A549 (cell line): ENCODE measurements at regions of chr11 and their contacts with region 1.

Region 1: DNA sequence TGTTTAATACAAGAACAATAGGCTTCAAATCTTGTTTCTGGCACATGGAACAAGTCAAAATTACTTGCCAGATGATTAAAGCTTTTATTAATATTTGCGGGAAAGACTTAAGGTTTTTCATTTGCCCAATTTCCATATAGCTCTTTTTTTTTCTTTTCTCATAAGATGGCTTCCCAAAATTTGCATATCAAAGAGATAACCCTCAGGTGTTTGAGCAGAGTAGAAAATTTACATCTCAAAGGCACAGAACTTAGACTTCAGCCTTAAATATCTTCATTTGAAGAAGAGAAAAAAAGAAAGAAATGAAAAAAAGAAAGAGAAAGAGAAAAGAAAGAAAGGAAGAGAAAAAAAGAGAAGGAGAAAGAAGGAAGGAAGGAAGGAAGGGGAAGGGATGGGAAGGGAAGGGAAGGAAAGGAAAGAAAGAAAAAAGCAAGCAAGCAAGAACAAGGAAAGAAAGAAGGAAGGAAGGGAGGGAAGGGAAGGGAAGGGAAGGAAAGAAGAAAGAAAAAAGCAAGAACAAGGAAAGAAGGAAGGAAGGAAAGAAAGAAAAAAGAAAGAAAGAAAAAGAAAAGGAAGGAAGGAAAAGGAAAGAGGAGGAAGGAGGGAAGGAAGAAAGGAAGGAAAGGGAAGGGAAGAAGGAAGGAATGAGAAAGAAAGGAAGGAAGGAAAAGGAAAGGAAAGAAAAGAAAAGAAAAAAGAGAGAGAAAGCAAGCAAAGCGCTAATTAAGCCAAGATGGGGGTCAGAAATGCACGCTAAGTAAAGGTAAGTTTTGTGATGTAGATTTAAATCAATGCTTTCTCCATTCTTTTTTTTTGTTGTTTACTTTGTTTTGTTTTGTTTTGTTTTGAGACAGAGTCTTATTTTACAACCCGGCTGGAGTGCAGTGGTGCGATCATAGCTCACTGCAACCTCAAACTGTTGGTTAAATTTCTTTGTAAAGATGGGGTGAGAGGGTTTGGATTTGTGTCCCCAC is 20.2 kb upstream of the IFITM3 start:
- DNase-seq: no peak
- ATAC-seq: no peak
- H3K4me3 ChIP-seq: no peak overlapping the region
- H3K27ac ChIP-seq: no peak overlapping the region
- H3K4me1 ChIP-seq: no peaks in the 10 kb centered on the region
- CTCF ChIP-seq: no peak
- EP300 ChIP-seq: no peak
- POLR2A ChIP-seq: no peak
- RAD21 ChIP-seq: no peak

Region 2: DNA sequence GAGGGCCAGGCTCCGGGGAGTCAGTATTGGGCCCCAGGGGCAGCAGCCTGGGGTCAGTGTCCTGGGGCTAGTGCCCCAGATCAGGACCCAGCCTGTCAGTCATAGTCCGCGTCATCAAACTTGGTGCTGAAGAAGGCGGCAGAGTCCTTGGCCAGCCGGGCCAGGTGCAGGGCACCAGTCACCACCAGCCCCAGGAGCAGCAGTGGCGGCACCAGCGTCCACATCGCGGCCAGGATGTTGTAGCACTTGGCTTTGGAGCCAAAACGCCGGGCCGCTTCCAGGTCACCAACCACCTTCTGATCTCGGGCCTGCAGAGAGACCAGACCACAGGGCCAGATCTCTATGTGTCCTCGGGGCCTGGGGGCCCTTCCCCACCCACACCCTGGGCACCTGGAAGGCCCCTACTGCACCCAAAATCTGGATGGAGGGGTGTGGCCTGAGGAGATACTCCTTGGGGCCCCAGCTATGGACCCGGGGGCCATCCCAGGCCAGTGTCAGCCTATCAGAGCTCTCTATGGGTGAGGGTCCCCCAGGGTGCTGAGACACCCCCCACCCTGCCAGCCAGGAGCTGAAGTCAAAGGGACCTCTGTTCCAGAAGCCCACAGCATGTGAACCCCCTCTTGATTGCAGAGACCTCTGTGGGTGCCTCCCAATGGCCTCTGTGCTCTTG is 42.3 kb before region 1 on chr11:
- CTCF ChIA-PET with region 1: no interaction called
- POLR2A ChIA-PET with region 1: no interaction called
- DNase-seq: no peak
- ATAC-seq: no peak; a peak in 1 of 6 replicates
- H3K4me3 ChIP-seq: no peak overlapping the region
- H3K27ac ChIP-seq: peak overlapping the region in 1 of 2 experiments; percentile 21; a peak in 2 of 6 replicates
- H3K4me1 ChIP-seq: no peaks in the 10 kb centered on the region
- CTCF ChIP-seq: no peak
- EP300 ChIP-seq: no peak
- POLR2A ChIP-seq: no peak
- RAD21 ChIP-seq: no peak

Region 3: GRCh38 chr11:355581-356458 is 15.0 kb after region 1 on chr11:
- CTCF ChIA-PET with region 1: interaction called, 11 read pairs
- POLR2A ChIA-PET with region 1: interaction called, 9 read pairs
- DNase-seq: peak; percentile 84 to 92
- ATAC-seq: peak; percentile 91 to 94
- H3K4me3 ChIP-seq: peak overlapping the region; percentile 47
- H3K27ac ChIP-seq: peak overlapping the region; percentile 98 to 99
- H3K4me1 ChIP-seq: peaks cover 21% of the 10 kb centered on the region
- CTCF ChIP-seq: no peak
- EP300 ChIP-seq: peak in 1 of 2 experiments; percentile 73; a peak in 2 of 5 replicates
- POLR2A ChIP-seq: peak; percentile 61
- RAD21 ChIP-seq: no peak

Region 4: GRCh38 chr11:1351278-1351937 is 1010.6 kb after region 1 on chr11:
- CTCF ChIA-PET with region 1: no interaction called
- POLR2A ChIA-PET with region 1: no interaction called
- DNase-seq: peak in 1 of 2 experiments; percentile 71
- ATAC-seq: peak in 1 of 2 experiments; percentile 21; a peak in 1 of 6 replicates
- H3K4me3 ChIP-seq: no peak overlapping the region
- H3K27ac ChIP-seq: no peak overlapping the region
- H3K4me1 ChIP-seq: no peaks in the 10 kb centered on the region
- CTCF ChIP-seq: no peak
- EP300 ChIP-seq: no peak
- POLR2A ChIP-seq: peak; percentile 39
- RAD21 ChIP-seq: no peak